ENCODE measurements at regions of chr2 and their contacts with region 1.

Region 1: DNA sequence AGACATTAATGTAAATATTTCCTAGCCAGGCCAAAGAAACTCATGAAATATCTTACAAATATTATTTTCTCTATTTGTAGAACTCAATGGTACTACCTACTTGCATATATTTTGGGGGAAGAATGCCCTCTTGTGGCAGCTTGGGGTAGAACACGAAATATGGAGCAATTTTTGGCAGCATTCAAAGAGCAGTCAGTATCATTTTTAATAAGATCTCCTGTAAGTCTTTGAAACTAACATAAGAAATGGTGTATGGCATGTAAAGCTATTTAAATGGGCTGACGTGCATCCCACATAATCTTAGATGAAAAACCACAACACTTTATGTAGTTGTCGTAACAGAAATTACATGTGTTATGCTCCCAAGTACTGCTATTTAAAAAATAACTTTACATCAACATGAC is 62.3 kb upstream of the CCDC195 start:
- DNase-seq: peak; percentile 72
- ATAC-seq: no peak
- H3K4me3 ChIP-seq: no peak overlapping the region
- H3K4me3 Mint-ChIP-seq: no peak overlapping the region
- H3K27ac ChIP-seq: no peak overlapping the region
- H3K27ac Mint-ChIP-seq: no peak overlapping the region
- H3K4me1 ChIP-seq: no peaks in the 10 kb centered on the region
- H3K4me1 Mint-ChIP-seq: no peaks in the 10 kb centered on the region
- H3K27me3 ChIP-seq: no peaks in the 10 kb centered on the region
- H3K27me3 Mint-ChIP-seq: no peaks in the 10 kb centered on the region
- CTCF ChIP-seq: peak; percentile 97

Region 2: DNA sequence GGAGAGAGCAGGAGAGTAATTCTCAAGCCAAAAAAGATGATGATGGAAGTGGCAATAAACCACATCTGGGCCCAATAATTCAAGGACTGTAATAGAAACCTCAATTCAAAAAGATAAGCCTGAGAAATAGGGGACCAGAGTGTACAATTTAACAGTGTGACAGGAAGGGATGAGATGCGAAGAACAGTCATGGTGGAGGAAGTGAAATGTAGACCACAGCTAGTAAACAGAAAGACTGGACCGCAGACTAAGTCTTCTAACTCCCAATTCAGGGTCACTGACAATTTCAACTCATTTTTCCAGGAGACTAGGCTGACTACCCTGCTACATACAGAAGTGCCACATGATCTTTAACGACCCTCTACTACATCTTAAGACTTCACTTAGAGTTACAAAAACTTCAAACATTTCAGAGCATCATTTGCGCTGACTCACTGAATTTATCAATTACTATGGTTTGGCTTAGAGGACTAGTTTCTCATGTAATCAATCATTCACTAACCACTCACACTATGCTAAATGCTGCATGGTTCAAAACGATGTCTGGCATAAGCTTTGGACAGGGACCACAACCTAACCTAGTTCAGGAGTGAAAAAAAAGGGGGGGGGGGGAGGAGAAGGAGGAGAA is 202.3 kb before region 1 on chr2:
- CTCF ChIA-PET with region 1: no interaction called
- POLR2A ChIA-PET with region 1: no interaction called
- intact Hi-C with region 1: no loop called
- DNase-seq: peak; percentile 27
- ATAC-seq: peak; percentile 57
- H3K4me3 ChIP-seq: no peak overlapping the region
- H3K4me3 Mint-ChIP-seq: peak overlapping the region; percentile 35
- H3K27ac ChIP-seq: no peak overlapping the region
- H3K27ac Mint-ChIP-seq: peak overlapping the region; percentile 68
- H3K4me1 ChIP-seq: peaks cover 66 to 80% of the 10 kb centered on the region in 2 donors
- H3K4me1 Mint-ChIP-seq: peaks cover 89% of the 10 kb centered on the region
- H3K27me3 ChIP-seq: no peaks in the 10 kb centered on the region
- H3K27me3 Mint-ChIP-seq: no peaks in the 10 kb centered on the region
- CTCF ChIP-seq: no peak

Region 3: DNA sequence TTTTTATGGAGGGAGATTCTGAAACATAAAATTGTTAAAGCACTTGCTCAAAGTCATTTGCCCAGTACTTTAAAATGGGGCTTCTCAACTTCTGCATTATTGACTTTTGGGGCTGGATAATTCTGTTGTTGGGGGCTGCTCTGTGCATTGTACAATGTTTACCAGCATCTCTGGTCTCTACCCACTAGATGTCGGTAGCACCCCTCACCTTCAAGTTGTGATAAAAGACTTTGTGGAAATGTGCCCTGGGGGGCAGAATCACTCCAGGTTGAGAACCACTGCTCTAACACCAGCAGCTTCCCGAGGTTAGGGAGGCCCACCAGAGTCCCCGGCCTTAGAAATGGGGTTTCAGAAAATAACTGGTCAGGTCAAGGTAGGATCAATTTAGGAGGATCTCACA is 166.5 kb before region 1 on chr2:
- CTCF ChIA-PET with region 1: interaction called, 21 read pairs
- POLR2A ChIA-PET with region 1: no interaction called
- intact Hi-C with region 1: loop called (anchors 1 kb)
- DNase-seq: no peak
- ATAC-seq: peak; percentile 51
- H3K4me3 ChIP-seq: no peak overlapping the region
- H3K4me3 Mint-ChIP-seq: no peak overlapping the region
- H3K27ac ChIP-seq: no peak overlapping the region
- H3K27ac Mint-ChIP-seq: no peak overlapping the region
- H3K4me1 ChIP-seq: no peaks in the 10 kb centered on the region
- H3K4me1 Mint-ChIP-seq: no peaks in the 10 kb centered on the region
- H3K27me3 ChIP-seq: no peaks in the 10 kb centered on the region
- H3K27me3 Mint-ChIP-seq: no peaks in the 10 kb centered on the region
- CTCF ChIP-seq: peak; percentile 6

Region 4: DNA sequence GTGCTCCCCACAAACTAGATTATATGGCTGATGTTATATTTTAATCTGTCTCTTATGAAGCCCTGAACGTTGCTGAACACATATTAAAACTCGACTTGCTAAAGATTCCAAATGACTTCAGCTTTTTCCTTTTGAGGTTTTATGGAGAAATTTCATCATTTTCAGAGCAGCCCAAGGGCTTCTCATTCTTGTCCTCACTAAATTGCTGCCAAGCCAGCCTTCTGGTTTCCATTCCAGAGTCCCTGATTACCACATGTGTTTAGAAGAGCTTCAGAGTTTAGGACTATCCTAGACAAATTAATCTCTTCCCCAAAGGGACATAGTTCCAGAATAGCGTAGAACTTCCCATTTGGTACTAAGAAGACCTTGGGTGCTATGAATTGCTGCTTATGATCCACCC is 15.5 kb after region 1 on chr2:
- CTCF ChIA-PET with region 1: interaction called, 21 read pairs
- POLR2A ChIA-PET with region 1: no interaction called
- intact Hi-C with region 1: no loop called
- DNase-seq: no peak
- ATAC-seq: no peak
- H3K4me3 ChIP-seq: no peak overlapping the region
- H3K4me3 Mint-ChIP-seq: no peak overlapping the region
- H3K27ac ChIP-seq: no peak overlapping the region
- H3K27ac Mint-ChIP-seq: peak overlapping the region; percentile 28
- H3K4me1 ChIP-seq: no peaks in the 10 kb centered on the region
- H3K4me1 Mint-ChIP-seq: no peaks in the 10 kb centered on the region
- H3K27me3 ChIP-seq: no peaks in the 10 kb centered on the region
- H3K27me3 Mint-ChIP-seq: no peaks in the 10 kb centered on the region
- CTCF ChIP-seq: no peak